KBM-7 (cell line): ENCODE measurements at regions of chrX and their contacts with region 1.

Region 1: DNA sequence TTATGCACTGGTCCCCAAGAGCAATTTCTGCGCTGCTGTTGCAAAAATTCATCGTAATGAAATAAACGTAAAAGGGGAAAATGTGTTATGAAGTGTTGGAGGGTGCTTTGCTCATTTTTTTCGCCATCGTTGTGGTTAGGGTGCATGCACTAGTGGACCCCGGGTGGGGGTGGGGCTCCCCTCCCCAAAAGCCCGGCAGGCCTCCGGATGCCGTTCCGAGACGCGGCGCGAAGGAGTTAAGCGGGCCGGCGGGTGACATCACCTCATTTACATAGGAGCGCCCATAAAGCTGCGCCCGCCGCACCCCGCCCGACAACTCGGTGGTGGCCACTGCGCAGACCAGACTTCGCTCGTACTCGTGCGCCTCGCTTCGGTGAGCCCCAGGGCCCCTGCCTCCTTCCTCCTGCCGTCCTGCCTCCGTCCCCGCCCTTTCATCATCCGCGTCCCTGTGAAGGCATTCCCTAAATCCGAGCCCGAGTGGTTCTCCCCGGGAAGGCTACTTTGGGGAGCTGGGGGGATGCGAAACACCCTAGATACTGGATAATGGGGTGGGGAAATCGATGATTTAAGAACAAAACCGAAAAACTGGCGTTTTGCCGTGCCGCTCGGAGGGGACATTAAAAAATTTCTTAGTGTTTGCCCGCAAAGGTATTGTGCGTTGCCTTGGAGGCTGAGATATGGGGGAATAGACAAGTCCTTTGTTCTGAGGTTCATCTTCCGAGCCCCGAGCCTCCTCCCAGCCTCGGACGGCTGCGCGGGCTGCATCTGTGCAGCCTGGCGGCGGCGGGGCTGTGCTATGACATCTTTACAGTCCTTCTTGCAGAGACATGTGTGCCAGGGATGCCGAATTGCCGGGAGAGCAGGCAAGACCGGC is at the start of gene TMSB4X:
- DNase-seq: peak; percentile 92

Region 2: GRCh38 chrX:13487731-13488523 is 512.9 kb after region 1 on chrX:
- in situ Hi-C with region 1: loop called (anchors 25 kb)
- DNase-seq: peak; percentile 86